ENCODE measurements at regions of chr17 and their contacts with region 1.

Region 1: DNA sequence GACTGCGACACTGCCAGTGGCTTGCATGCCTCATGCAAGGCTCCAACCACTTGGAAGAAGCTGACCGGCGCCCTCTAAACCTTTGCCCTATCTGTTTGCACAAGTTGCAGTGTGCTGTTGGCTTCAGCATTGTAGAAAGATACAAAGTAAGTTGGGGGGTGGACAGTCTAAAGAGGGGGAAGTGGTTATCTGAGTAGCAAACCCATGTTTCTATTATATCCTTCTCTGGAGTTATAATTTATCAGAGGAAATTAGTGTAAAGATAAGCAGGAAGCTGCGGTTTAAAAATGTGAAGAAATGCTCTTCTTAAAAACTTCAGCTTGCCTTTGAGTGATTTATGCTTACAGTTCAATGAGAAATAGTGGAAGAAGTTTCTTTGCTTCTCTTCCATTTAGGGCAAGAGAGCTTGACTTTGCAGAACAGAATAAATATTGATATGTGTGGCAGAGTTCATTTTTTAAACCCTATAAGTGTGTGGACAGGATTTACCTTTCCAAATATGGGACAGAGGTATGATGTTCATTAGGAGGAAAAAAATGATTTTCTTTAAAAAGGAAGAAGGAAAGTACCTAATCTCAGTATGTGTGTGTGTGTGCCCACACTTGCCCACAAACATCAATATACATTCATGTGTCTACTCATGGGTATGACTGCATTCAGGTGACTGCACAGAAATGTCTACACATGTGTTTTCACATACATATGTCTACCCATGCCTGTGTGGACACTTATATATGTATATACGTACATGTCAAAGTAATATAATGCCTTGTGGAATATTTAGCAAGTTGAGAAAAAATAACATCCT is 8.1 kb downstream of the AMZ2 start:
- DNase-seq: no peak
- ATAC-seq: no peak
- H3K4me3 ChIP-seq: no peak overlapping the region
- H3K27ac ChIP-seq: no peak overlapping the region
- H3K4me1 ChIP-seq: no peaks in the 10 kb centered on the region
- CTCF ChIP-seq: no peak
- EP300 ChIP-seq: no peak
- POLR2A ChIP-seq: no peak
- RAD21 ChIP-seq: no peak

Region 2: GRCh38 chr17:68290261-68290954 is 34.5 kb after region 1 on chr17:
- CTCF ChIA-PET with region 1: no interaction called
- POLR2A ChIA-PET with region 1: no interaction called
- DNase-seq: no peak
- ATAC-seq: no peak
- H3K4me3 ChIP-seq: peak overlapping the region; percentile 88; the same call in 2 of the 3 replicates
- H3K27ac ChIP-seq: peak overlapping the region in 1 of 2 experiments; percentile 92; a peak in 2 of 6 replicates
- H3K4me1 ChIP-seq: peaks cover 9% of the 10 kb centered on the region; the same call in 2 of the 3 replicates
- CTCF ChIP-seq: no peak
- EP300 ChIP-seq: no peak
- POLR2A ChIP-seq: no peak
- RAD21 ChIP-seq: no peak

Region 3: GRCh38 chr17:68441064-68441770 is 185.3 kb after region 1 on chr17:
- CTCF ChIA-PET with region 1: interaction called, 89 read pairs
- POLR2A ChIA-PET with region 1: no interaction called
- DNase-seq: no peak
- ATAC-seq: no peak
- H3K4me3 ChIP-seq: no peak overlapping the region
- H3K27ac ChIP-seq: no peak overlapping the region
- H3K4me1 ChIP-seq: 0 out of 3 replicates have a peak, but pooled peaks cover under 1% of the 10 kb centered on the region
- CTCF ChIP-seq: no peak
- EP300 ChIP-seq: no peak
- POLR2A ChIP-seq: no peak
- RAD21 ChIP-seq: no peak

Measured in A549 (cell line).